ENCODE measurements at regions of chr16 and their contacts with region 1.

Region 1: DNA sequence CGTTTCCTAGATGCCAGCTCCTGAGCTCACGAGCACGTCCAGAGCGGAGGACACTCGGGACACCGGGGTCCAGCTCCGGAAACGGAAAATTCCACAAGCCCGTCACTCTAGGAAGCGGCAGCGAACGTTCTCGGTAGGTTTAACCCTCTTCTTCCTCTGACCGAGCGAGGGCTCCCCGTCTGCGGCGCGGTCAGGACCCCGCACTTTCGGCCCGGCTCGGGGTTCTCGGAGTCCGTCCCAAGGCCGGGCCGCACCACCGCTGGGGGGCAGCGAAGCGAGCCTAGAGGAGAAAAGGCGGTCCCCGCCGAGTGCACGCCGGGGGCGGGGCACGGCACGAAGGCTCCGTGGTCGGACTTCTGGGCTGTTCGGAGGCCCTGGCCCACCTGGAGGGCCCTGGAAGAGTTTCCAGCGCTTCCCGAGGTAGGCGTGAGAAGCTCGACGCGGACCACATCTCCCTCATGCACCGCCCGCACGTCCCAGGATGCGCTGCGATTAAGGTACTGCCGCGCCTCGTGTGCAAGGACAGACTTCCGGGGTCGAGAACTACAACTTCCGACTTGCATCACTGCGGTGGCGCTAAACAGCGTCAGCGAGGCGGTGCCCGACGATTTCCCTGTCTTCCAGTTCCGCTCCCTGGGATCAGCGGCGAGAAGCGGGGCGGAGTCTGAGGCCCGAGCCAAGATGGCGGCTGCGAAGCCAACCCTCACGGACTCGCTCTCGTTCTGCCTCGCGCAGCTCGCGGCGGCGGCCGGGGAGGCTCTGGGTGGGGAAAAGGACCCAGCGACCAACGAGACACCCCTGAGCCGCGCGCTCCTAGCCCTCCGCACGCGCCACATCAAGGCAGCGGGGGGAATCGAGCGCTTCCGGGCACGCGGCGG is at the start of gene ARMC5:
- DNase-seq: peak; percentile 98
- ATAC-seq: peak; percentile 81
- H3K4me3 Mint-ChIP-seq: peak within 1 kb of the TSS; percentile 85
- H3K27ac Mint-ChIP-seq: peak within 1 kb of the TSS; percentile 94
- H3K4me1 Mint-ChIP-seq: peaks cover 42% of the 10 kb centered on the region
- H3K27me3 Mint-ChIP-seq: no peaks in the 10 kb centered on the region
- total RNA-seq, gene ARMC5: 7.0 to 7.9 TPM

Region 2: DNA sequence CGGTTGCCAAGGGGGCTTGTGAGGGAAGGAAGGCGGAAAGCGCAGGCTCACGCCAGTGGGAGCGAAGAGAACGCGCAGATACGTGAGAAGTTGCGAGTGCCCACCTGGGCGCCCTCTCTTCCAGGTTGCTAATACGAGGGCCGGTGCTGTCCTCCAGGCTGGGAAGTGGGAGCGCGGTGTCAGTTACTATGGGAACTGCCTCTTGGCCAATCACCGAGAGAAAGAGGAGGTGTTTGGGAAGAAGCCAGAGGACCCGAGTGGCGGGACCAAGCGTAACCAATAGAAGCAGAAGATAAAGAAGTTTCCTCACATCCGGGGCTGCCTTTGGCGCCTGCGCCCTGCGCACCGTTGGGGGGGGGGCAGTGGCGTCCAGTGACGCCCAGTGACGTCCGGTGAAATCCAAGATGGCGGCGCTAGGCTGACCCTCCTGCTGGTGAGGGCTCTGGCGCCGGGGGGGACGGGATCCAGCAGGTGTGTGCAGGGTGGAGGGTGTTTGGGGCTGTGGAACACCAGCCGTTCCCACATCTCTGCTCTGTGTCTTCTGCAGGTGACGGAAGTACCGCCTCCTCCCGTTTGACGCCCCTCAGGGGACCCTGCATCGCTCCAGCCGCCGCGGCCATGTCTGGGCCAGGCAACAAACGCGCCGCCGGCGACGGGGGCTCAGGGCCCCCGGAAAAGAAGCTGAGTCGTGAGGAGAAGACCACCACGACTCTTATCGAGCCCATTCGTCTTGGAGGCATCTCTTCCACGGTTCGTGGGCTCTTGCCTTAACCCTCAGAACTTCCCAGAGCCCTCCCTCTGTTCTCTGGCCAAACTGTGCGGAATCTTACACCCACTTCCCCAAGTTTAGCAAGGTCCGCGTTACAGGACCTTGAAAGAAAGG is 696.9 kb before region 1 on chr16 and contains the starts of genes CFAP119 and RNF40:
- CTCF ChIA-PET with region 1: no interaction called
- POLR2A ChIA-PET with region 1: no interaction called
- intact Hi-C with region 1: loop called in 1 of 2 experiments (anchors 1 kb)
- DNase-seq: peak; percentile 94
- ATAC-seq: peak; percentile 98
- H3K4me3 Mint-ChIP-seq: peak within 1 kb of the TSS; percentile 90
- H3K27ac Mint-ChIP-seq: peak within 1 kb of the TSS; percentile 83
- H3K4me1 Mint-ChIP-seq: peaks cover 25% of the 10 kb centered on the region
- H3K27me3 Mint-ChIP-seq: no peaks in the 10 kb centered on the region
- total RNA-seq, gene CFAP119: 1.7 to 3.1 TPM
- total RNA-seq, gene RNF40: 72.3 to 85.5 TPM

Region 3: GRCh38 chr16:31032736-31033708 is 426.1 kb before region 1 on chr16 and contains the start of gene STX4:
- CTCF ChIA-PET with region 1: interaction called, 3 read pairs
- POLR2A ChIA-PET with region 1: no interaction called
- intact Hi-C with region 1: loop called in 1 of 2 experiments (anchors 1 kb)
- DNase-seq: peak; percentile 99
- ATAC-seq: peak; percentile 89
- H3K4me3 Mint-ChIP-seq: peak within 1 kb of the TSS; percentile 96
- H3K27ac Mint-ChIP-seq: peak within 1 kb of the TSS; percentile 93
- H3K4me1 Mint-ChIP-seq: peaks cover 15% of the 10 kb centered on the region
- H3K27me3 Mint-ChIP-seq: no peaks in the 10 kb centered on the region
- total RNA-seq, gene STX4: 29.2 to 35.9 TPM

Region 4: DNA sequence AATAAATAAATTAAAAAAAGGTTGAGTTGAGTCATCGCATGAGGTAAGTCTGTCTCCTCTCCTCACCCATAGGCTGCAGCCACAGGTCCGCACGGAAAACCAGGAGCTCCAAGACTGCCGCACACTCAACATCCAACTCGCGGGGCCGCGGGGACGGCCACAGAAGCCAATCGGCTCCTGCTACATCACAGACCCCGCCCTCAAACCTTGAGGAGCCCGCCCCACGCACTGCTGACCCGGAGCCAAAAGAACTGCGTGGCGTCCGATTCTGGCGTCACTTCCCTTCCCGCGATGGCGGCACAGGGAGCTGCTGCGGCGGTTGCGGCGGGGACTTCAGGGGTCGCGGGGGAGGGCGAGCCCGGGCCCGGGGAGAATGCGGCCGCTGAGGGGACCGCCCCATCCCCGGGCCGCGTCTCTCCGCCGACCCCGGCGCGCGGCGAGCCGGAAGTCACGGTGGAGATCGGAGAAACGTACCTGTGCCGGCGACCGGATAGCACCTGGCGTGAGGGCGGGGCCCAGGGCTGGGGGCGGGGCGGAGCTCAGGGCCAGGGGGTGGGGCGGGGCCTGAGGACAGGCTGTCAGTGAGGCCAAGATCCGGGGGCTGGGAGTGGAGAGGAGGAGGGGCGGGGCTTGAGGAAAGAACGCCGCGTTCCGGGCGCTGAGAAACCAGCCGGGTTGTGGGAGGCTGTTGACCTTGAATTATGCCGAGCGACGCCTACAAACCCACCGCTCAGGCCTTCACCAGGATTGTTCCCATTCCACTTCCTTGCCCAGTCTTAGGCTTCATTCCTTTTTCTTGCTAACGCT is 341.5 kb before region 1 on chr16 and contains the start of gene KAT8:
- CTCF ChIA-PET with region 1: no interaction called
- POLR2A ChIA-PET with region 1: no interaction called
- intact Hi-C with region 1: loop called in 1 of 2 experiments (anchors 1 kb)
- DNase-seq: peak; percentile 99
- ATAC-seq: peak; percentile 93
- H3K4me3 Mint-ChIP-seq: peak within 1 kb of the TSS; percentile 88
- H3K27ac Mint-ChIP-seq: peak within 1 kb of the TSS; percentile 83
- H3K4me1 Mint-ChIP-seq: peaks cover 14% of the 10 kb centered on the region
- H3K27me3 Mint-ChIP-seq: no peaks in the 10 kb centered on the region
- total RNA-seq, gene KAT8: 53.6 to 63.1 TPM

Region 5: DNA sequence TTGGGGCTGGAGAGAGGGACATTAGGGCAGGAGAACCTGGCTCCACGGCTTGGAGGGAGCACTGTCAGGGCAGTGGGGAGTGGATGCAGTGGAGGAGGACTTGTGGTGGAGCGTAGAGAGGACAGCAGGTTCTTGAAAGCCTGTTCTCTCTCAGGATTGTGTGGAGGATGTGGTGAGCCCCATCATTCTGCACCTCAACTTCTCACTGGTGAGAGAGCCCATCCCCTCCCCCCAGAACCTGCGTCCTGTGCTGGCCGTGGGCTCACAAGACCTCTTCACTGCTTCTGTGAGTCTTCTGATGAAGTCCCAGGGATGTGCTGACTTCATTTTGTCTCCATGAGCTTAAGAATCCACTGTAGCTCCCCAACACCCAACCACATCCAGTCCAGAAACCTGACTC is 44.4 kb before region 1 on chr16:
- CTCF ChIA-PET with region 1: no interaction called
- POLR2A ChIA-PET with region 1: no interaction called
- intact Hi-C with region 1: no loop called
- DNase-seq: no peak
- ATAC-seq: no peak
- H3K4me3 Mint-ChIP-seq: no peak overlapping the region
- H3K27ac Mint-ChIP-seq: no peak overlapping the region
- H3K4me1 Mint-ChIP-seq: no peaks in the 10 kb centered on the region
- H3K27me3 Mint-ChIP-seq: peaks cover 9% of the 10 kb centered on the region

Region 6: GRCh38 chr16:31440516-31441184 is 18.4 kb before region 1 on chr16:
- CTCF ChIA-PET with region 1: interaction called, 35 read pairs
- POLR2A ChIA-PET with region 1: interaction called, 3 read pairs
- intact Hi-C with region 1: loop called in 1 of 2 experiments (anchors 1 kb)
- DNase-seq: no peak
- ATAC-seq: no peak
- H3K4me3 Mint-ChIP-seq: no peak overlapping the region
- H3K27ac Mint-ChIP-seq: no peak overlapping the region
- H3K4me1 Mint-ChIP-seq: peaks cover 18% of the 10 kb centered on the region
- H3K27me3 Mint-ChIP-seq: peaks cover 2% of the 10 kb centered on the region

Region 7: DNA sequence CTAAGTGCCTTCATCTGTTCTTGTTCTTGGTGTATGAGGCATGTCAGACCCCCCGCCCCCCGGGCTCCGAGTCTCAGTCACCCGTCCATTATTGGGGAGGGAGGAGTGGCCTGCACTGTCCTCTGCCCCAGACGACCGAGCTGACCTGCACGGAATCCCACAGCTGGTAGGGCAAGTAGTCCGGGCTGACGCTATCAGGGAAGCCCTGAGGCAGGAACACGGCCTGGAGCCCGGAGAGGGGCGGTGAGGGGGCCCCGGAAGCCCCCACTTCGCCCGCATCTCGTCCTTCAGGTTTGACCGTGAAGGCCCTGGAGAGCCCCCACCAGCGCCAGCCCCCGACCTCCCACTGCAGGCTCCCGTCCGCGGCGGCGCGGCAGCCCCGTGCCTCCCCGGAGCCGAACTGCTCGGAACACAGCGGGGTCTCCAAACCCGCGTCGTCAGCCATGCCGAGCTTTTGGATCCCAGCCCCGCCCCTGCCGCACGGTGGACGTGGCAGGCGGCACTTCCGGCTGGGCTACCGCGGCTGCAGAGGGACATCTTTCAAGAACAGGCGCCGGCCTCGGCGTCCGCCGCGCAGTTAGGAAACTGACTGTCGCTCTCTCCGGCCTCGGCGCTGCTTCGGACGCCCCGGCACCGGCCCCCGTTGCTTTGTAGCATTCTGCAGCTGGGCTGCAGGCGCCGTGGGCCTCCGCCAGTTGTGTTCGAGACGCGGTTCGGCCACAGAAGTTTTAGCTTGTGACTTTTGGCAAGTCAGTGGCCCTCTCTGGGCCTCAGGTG is 49.0 kb after region 1 on chr16 and contains the start of gene RUSF1:
- CTCF ChIA-PET with region 1: interaction called, 6 read pairs
- POLR2A ChIA-PET with region 1: interaction called, 3 read pairs
- intact Hi-C with region 1: loop called (anchors 1 to 5 kb)
- DNase-seq: peak; percentile 94
- ATAC-seq: peak; percentile 77
- H3K4me3 Mint-ChIP-seq: peak within 1 kb of the TSS; percentile 88
- H3K27ac Mint-ChIP-seq: peak within 1 kb of the TSS; percentile 98
- H3K4me1 Mint-ChIP-seq: peaks cover 47% of the 10 kb centered on the region
- H3K27me3 Mint-ChIP-seq: no peaks in the 10 kb centered on the region
- total RNA-seq, gene RUSF1: 36.3 to 37.7 TPM

Region 8: GRCh38 chr16:31868691-31869167 is 409.6 kb after region 1 on chr16:
- CTCF ChIA-PET with region 1: interaction called, 17 read pairs
- POLR2A ChIA-PET with region 1: interaction called, 6 read pairs
- intact Hi-C with region 1: loop called (anchors 1 kb)
- DNase-seq: peak; percentile 90
- ATAC-seq: peak; percentile 54
- H3K4me3 Mint-ChIP-seq: peak overlapping the region; percentile 63
- H3K27ac Mint-ChIP-seq: peak overlapping the region; percentile 91
- H3K4me1 Mint-ChIP-seq: peaks cover 55% of the 10 kb centered on the region
- H3K27me3 Mint-ChIP-seq: no peaks in the 10 kb centered on the region

Measured in activated CD4-positive, alpha-beta T cell treated with anti-CD3 and anti-CD28 coated beads for 36 hours (primary cell).